Activated B cell treated with CpG ODN at 0.5 μM for 24 hours (primary cell): ENCODE measurements at regions of chr7 and their contacts with region 1.

Region 1: DNA sequence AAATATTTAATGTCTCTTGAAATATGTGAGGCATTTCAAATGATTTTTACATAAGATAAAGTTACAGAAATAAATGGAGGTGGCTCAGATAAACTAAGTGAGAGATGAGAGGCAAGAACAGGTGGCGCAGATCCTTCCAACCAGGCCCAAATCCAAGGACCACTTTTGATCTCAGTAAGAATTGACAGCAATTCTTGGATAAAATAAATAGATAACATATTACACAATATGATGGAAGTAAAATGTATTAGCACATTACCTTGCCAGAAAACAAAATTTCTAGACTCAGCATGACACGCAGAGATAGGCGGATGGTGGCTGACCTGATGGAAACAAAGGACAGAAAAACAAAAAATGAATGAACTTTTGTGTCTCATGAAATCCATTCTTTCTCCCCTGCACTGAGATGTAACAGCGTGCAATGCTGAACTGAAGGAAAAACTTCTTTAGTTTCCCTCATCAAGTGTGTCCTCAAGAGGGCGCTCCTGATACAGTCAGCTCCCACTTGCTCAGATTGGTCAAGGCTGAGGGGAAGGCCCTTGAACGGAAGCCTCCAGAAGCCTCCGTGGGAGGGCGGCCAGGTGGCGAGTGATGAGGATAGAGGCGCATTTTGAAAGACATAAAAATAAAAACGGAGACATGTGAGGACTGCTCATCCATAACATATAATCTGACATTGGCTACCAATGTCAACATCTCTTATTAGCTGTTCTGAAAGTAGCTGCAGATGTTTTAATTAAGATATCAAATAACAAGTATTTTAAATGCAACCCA is 62.8 kb upstream of the GSDME start:
- DNase-seq: peak; percentile 45
- ATAC-seq: peak; percentile 56
- H3K4me3 Mint-ChIP-seq: peak overlapping the region; percentile 80
- H3K27ac Mint-ChIP-seq: peak overlapping the region; percentile 94
- H3K4me1 Mint-ChIP-seq: peaks cover 40% of the 10 kb centered on the region
- H3K27me3 Mint-ChIP-seq: no peaks in the 10 kb centered on the region
- CTCF ChIP-seq: peak; percentile 74

Region 2: GRCh38 chr7:24545215-24545614 is 274.9 kb before region 1 on chr7:
- CTCF ChIA-PET with region 1: no interaction called
- POLR2A ChIA-PET with region 1: no interaction called
- intact Hi-C with region 1: no loop called
- DNase-seq: no peak
- ATAC-seq: no peak
- H3K4me3 Mint-ChIP-seq: no peak overlapping the region
- H3K27ac Mint-ChIP-seq: no peak overlapping the region
- H3K4me1 Mint-ChIP-seq: no peaks in the 10 kb centered on the region
- H3K27me3 Mint-ChIP-seq: peaks cover 17% of the 10 kb centered on the region
- CTCF ChIP-seq: no peak

Region 3: GRCh38 chr7:24836084-24836483 is 16.0 kb after region 1 on chr7:
- CTCF ChIA-PET with region 1: interaction called, 64 read pairs
- POLR2A ChIA-PET with region 1: interaction called, 62 read pairs
- intact Hi-C with region 1: loop called (anchors 1 kb)
- DNase-seq: no peak
- ATAC-seq: peak; percentile 79
- H3K4me3 Mint-ChIP-seq: peak overlapping the region; percentile 39
- H3K27ac Mint-ChIP-seq: peak overlapping the region; percentile 99
- H3K4me1 Mint-ChIP-seq: peaks cover 75% of the 10 kb centered on the region
- H3K27me3 Mint-ChIP-seq: no peaks in the 10 kb centered on the region
- CTCF ChIP-seq: no peak

Region 4: DNA sequence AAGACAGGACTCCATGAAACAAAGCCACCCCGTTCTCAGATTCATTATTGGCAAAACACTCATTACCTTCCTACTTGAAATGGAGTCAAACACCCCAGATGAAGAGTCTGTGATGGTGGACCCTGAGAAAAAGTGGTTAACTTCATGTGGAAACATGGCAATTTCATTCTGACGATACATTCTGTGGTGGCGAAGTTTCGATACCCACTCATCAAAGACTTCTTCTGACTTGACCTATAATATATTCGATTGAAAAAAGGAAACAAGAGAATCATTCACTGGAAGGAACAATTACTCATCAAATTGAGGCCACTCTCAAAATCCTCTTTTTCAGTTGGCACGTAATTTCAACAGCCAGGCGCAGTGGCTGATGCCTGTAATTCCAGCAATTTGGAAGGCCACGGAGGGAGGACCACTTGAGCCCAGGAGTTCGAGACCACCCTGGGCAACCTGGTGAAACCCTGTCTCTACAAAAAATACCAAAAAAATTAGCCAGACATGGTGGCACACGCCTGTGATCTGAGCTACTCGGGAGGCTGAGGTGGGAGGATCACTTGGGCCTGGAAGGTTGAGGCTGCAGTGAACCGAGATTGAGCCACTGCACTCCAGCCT is 46.0 kb after region 1 on chr7:
- CTCF ChIA-PET with region 1: no interaction called
- POLR2A ChIA-PET with region 1: no interaction called
- intact Hi-C with region 1: no loop called
- DNase-seq: no peak
- ATAC-seq: no peak
- H3K4me3 Mint-ChIP-seq: no peak overlapping the region
- H3K27ac Mint-ChIP-seq: no peak overlapping the region
- H3K4me1 Mint-ChIP-seq: peaks cover 4% of the 10 kb centered on the region
- H3K27me3 Mint-ChIP-seq: no peaks in the 10 kb centered on the region
- CTCF ChIP-seq: no peak

Region 5: DNA sequence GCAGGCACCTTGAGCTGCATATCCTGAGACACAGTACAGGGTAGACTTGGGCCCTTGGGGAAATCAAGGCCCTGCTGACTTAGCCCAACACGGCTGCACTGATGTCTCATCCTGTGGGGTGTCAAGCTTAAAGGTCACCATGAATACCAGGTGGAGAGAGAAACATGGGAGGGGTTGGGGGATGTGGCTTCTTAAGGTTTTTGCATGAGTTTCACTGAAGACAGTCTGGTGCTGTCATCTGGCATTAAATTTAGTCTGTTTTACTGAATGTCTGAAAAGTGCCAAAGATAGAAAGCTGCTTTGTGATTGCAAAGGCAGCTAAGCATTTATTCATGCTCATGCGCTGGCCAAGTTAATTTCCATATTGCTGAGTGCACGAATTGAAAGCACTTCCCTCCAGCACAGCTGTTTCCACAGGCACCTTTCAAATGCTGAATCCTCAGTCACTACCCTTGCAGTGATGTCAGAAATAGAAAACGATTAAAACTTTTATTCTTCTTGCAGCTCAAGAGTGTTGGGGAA is 57.7 kb after region 1 on chr7:
- CTCF ChIA-PET with region 1: interaction called, 17 read pairs
- POLR2A ChIA-PET with region 1: interaction called, 16 read pairs
- intact Hi-C with region 1: loop called (anchors 1 kb)
- DNase-seq: no peak
- ATAC-seq: peak; percentile 90
- H3K4me3 Mint-ChIP-seq: peak overlapping the region; percentile 64
- H3K27ac Mint-ChIP-seq: peak overlapping the region; percentile 83
- H3K4me1 Mint-ChIP-seq: peaks cover 34% of the 10 kb centered on the region
- H3K27me3 Mint-ChIP-seq: no peaks in the 10 kb centered on the region
- CTCF ChIP-seq: no peak

Region 6: DNA sequence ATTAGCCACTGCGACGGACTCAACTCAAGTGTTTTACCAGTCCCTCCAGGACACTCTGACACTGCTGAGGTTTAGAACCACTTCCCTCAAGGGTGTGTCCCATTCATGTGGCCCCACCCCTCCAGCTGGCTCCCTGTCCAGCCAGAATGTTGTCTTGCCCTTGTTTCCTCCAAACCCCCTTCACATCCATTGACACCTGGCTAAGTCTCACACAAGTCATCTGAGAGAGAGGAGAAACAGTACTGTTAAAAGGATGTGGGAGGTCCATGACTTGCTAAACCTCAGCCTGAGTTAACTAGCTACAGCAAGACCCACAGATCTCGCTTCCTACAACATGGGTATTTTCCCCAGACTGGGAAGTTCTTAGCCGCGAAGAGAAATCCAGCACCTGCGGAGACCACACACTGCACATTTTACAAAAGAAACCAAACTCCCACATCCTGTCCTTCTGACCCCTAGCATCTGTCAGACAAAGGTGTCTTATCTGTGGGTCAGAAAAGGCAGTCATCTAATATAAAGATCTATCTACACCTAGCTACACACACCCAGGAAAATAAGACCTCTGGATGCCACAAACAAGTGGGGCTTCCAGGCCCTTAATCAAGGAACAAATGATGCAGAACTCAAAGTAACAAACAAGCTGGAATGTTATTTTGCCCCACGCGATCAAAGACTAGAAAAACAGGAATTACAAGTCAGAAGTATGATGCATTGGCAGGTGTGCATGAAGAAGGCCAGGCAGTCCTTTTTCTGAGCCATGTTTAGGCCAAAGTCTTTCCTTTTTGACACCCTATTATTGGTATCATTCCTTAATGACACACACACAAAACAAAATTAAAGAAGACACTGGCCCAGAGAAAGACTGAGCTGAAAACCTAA is 146.0 kb after region 1 on chr7:
- CTCF ChIA-PET with region 1: interaction called, 11 read pairs
- POLR2A ChIA-PET with region 1: interaction called, 3 read pairs
- intact Hi-C with region 1: loop called (anchors 1 kb)
- DNase-seq: no peak
- ATAC-seq: peak; percentile 57
- H3K4me3 Mint-ChIP-seq: peak overlapping the region; percentile 42
- H3K27ac Mint-ChIP-seq: peak overlapping the region; percentile 84
- H3K4me1 Mint-ChIP-seq: peaks cover 74% of the 10 kb centered on the region
- H3K27me3 Mint-ChIP-seq: no peaks in the 10 kb centered on the region
- CTCF ChIP-seq: no peak

Region 7: GRCh38 chr7:25093268-25093826 is 273.2 kb after region 1 on chr7:
- CTCF ChIA-PET with region 1: interaction called, 213 read pairs
- POLR2A ChIA-PET with region 1: interaction called, 4 read pairs
- intact Hi-C with region 1: loop called (anchors 1 kb)
- DNase-seq: peak; percentile 71
- ATAC-seq: peak; percentile 89
- H3K4me3 Mint-ChIP-seq: no peak overlapping the region
- H3K27ac Mint-ChIP-seq: no peak overlapping the region
- H3K4me1 Mint-ChIP-seq: peaks cover 8% of the 10 kb centered on the region
- H3K27me3 Mint-ChIP-seq: peaks cover 3% of the 10 kb centered on the region
- CTCF ChIP-seq: no peak

Region 8: DNA sequence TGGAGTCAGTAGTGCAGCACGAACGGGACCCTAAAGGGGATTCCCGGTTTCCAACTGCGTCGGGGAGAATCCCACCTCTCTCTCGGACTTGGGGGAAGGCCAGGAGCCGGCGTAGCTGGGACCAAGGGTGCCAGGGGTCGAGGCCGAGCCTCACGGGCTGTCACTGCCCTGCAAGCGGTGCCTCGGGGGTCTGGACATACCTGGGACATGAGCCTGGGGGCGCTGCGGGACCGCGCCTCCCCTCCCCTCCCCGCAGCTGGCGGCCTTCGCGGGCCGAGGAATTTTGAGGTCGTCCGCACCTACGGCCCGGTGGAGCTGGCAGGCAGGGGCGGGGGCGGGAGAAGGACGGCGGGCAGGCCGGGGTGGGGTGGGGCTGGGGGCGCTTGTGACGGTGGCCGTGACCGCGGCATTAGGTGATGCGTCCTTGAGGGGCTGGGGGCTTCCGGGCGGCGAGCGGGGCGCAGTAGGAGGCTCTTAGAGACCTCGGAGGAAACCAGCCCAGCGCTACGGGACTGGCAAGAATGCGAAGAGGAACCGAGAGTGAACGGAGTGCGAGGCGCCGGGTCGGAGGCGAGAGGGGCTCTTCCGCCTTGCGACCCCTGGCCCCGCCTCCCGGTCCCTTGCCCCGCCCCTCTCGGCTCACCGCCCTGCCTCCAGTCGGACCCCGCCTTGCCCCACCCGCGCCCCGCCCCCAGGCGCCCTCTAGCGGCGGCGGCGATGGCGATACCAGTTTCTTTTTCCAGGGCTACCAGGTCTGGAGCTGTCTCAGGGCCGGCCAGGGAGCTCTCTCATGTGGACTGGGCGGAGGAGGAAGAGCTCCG is 359.9 kb after region 1 on chr7:
- CTCF ChIA-PET with region 1: no interaction called
- POLR2A ChIA-PET with region 1: no interaction called
- intact Hi-C with region 1: loop called (anchors 5 kb)
- DNase-seq: peak; percentile 100
- ATAC-seq: peak; percentile 97
- H3K4me3 Mint-ChIP-seq: peak overlapping the region; percentile 87
- H3K27ac Mint-ChIP-seq: peak overlapping the region; percentile 95
- H3K4me1 Mint-ChIP-seq: peaks cover 15% of the 10 kb centered on the region
- H3K27me3 Mint-ChIP-seq: no peaks in the 10 kb centered on the region
- CTCF ChIP-seq: peak; percentile 46

Region 9: GRCh38 chr7:26413012-26413691 is 1593.0 kb after region 1 on chr7:
- CTCF ChIA-PET with region 1: no interaction called
- POLR2A ChIA-PET with region 1: no interaction called
- intact Hi-C with region 1: no loop called
- DNase-seq: no peak
- ATAC-seq: no peak
- H3K4me3 Mint-ChIP-seq: no peak overlapping the region
- H3K27ac Mint-ChIP-seq: no peak overlapping the region
- H3K4me1 Mint-ChIP-seq: no peaks in the 10 kb centered on the region
- H3K27me3 Mint-ChIP-seq: peaks cover 4% of the 10 kb centered on the region
- CTCF ChIP-seq: no peak